Activated CD4-positive, alpha-beta T cell treated with anti-CD3 and anti-CD28 coated beads for 36 hours (primary cell): ENCODE measurements at regions of chr2 and their contacts with region 1.

Region 1: DNA sequence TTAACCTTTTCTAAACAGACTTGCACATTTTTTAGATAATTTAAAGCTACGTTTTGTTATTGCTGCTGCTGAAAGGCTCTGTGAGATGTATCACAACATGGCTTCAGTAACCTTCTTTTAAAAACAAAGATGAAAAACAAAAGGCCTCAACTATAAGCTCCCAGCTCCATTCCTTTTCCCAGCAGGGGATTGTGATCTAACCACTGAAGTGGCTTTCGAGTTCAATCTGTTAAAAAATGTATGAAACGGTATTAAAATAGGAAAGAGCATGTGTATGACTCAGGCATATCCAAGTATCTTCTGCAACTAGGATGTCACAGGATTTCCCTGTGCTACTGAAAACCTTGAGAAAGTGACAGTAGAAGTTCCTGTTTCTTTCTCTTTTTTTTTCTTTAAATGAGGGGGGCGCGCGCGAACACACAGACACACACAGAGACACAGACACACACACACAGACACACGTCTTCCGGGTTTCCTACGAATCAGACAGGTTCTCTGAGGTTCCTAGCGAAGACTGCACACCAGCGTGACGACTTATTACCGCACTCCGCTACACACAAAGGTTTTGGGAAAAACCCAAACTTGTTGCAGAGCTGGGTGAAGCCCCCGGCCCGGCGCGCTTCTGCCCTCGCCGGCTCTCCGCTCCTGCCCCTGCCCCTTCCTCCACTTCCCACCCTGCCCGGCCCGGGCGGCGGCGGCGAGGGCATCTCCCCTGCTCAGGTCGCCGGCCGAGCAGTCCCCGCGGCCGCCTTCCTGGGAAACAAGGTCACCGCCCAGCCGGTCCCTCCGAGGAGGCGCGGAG is 86.8 kb downstream of the RBMS1 start:
- DNase-seq: peak; percentile 82
- ATAC-seq: peak; percentile 75
- H3K4me3 Mint-ChIP-seq: peak overlapping the region; percentile 85
- H3K27ac Mint-ChIP-seq: peak overlapping the region; percentile 98
- H3K4me1 Mint-ChIP-seq: peaks cover 79% of the 10 kb centered on the region
- H3K27me3 Mint-ChIP-seq: no peaks in the 10 kb centered on the region

Region 2: GRCh38 chr2:159286709-159287441 is 1119.9 kb before region 1 on chr2:
- CTCF ChIA-PET with region 1: no interaction called
- POLR2A ChIA-PET with region 1: no interaction called
- intact Hi-C with region 1: loop called in 1 of 2 experiments (anchors 10 kb)
- DNase-seq: peak; percentile 99
- ATAC-seq: peak; percentile 99
- H3K4me3 Mint-ChIP-seq: peak overlapping the region; percentile 84
- H3K27ac Mint-ChIP-seq: peak overlapping the region; percentile 83
- H3K4me1 Mint-ChIP-seq: peaks cover 29% of the 10 kb centered on the region
- H3K27me3 Mint-ChIP-seq: no peaks in the 10 kb centered on the region

Region 3: DNA sequence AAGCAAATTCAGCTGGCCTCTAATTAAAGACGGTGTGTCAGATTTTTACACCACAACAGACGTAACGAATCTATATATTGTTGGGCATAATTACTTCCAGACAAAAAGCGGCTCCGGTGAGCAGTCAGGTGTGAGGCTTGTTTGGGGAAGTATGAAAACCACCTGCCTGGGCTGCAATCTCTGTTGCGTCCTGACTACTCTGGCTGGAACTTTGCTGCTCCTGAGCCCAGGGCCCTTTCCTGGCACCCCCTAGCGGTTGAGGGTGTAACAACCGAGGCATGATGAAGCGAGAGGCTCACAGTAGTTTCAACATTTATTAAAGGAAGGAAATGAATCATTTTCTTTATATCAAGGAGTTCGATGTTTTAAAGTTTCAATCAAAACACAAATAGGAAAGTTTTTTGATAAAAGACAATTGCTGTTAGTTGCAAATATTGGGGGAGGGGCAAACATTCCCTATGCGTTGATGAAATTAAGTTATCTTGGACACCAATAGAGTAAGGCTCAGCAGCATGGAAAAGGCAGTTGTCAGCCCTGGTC is 196.1 kb before region 1 on chr2:
- CTCF ChIA-PET with region 1: no interaction called
- POLR2A ChIA-PET with region 1: no interaction called
- intact Hi-C with region 1: no loop called
- DNase-seq: peak; percentile 88
- ATAC-seq: peak; percentile 90
- H3K4me3 Mint-ChIP-seq: no peak overlapping the region
- H3K27ac Mint-ChIP-seq: no peak overlapping the region
- H3K4me1 Mint-ChIP-seq: peaks cover 33% of the 10 kb centered on the region
- H3K27me3 Mint-ChIP-seq: peaks cover 6% of the 10 kb centered on the region

Region 4: GRCh38 chr2:160269803-160270570 is 136.8 kb before region 1 on chr2:
- CTCF ChIA-PET with region 1: interaction called, 3 read pairs
- POLR2A ChIA-PET with region 1: interaction called, 3 read pairs
- intact Hi-C with region 1: loop called in 1 of 2 experiments (anchors 2 kb)
- DNase-seq: peak; percentile 80
- ATAC-seq: peak; percentile 59
- H3K4me3 Mint-ChIP-seq: peak overlapping the region; percentile 57
- H3K27ac Mint-ChIP-seq: peak overlapping the region; percentile 52
- H3K4me1 Mint-ChIP-seq: peaks cover 46% of the 10 kb centered on the region
- H3K27me3 Mint-ChIP-seq: no peaks in the 10 kb centered on the region

Region 5: GRCh38 chr2:160394153-160394552 is 12.6 kb before region 1 on chr2:
- CTCF ChIA-PET with region 1: interaction called, 10 read pairs
- POLR2A ChIA-PET with region 1: no interaction called
- intact Hi-C with region 1: loop called (anchors 1 to 2 kb)
- DNase-seq: no peak
- ATAC-seq: peak; percentile 89
- H3K4me3 Mint-ChIP-seq: peak overlapping the region; percentile 44
- H3K27ac Mint-ChIP-seq: peak overlapping the region; percentile 76
- H3K4me1 Mint-ChIP-seq: peaks cover 52% of the 10 kb centered on the region
- H3K27me3 Mint-ChIP-seq: no peaks in the 10 kb centered on the region

Region 6: GRCh38 chr2:160493227-160494028 is 86.6 kb after region 1 on chr2 and contains the start of gene RBMS1:
- CTCF ChIA-PET with region 1: interaction called, 3 read pairs
- POLR2A ChIA-PET with region 1: interaction called, 3 read pairs
- intact Hi-C with region 1: loop called (anchors 2 kb)
- DNase-seq: peak; percentile 70
- ATAC-seq: peak; percentile 31
- H3K4me3 Mint-ChIP-seq: peak within 1 kb of the TSS; percentile 91
- H3K27ac Mint-ChIP-seq: peak within 1 kb of the TSS; percentile 65
- H3K4me1 Mint-ChIP-seq: peaks cover 48% of the 10 kb centered on the region
- H3K27me3 Mint-ChIP-seq: peaks cover 2% of the 10 kb centered on the region
- total RNA-seq, gene RBMS1: 39.3 to 47.7 TPM

Region 7: DNA sequence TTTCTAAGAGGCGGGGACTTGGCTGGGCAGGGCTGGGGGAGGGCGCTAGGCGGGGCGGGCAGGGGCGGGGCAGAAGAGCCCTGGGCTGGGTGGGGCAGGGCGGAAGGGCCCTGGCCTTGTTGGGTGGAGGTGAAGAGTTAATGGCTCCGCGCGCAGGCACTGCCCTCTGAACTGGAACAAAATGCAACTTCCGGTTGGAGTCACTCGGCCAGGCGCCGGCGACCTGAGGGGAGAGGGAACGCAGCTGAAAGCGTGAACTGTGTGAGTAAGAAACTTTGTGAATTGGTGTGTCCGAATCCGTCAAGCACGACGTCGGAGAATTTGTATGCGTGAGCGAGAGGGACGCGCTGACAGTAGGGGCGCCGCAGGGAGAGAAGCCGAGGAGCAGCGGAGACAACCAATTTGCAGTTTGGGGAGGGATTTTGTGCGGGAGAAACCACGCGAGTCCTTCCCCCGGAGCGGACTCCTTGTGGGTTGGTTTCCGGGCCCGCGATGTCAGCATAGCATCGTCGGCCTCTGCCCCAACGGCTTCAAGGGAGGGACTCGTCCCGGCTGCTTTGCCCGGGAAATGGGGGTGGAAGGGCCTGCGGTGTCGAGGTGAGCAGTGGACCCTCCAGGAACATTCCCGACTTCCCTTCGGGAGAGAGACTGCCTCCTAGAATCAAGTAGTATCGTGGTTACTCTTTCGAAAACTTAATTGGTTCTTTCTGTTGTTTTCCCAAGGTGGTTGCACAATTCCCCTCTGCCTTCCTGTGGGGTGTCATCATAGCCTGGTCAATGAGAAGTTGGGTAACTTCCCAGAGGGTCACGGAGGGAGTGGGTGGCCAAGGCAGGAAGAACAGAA is 753.7 kb after region 1 on chr2 and contains the start of gene TANK:
- CTCF ChIA-PET with region 1: no interaction called
- POLR2A ChIA-PET with region 1: no interaction called
- intact Hi-C with region 1: loop called (anchors 10 kb)
- DNase-seq: peak; percentile 95
- ATAC-seq: peak; percentile 95
- H3K4me3 Mint-ChIP-seq: peak within 1 kb of the TSS; percentile 91
- H3K27ac Mint-ChIP-seq: peak within 1 kb of the TSS; percentile 99
- H3K4me1 Mint-ChIP-seq: peaks cover 52% of the 10 kb centered on the region
- H3K27me3 Mint-ChIP-seq: no peaks in the 10 kb centered on the region
- total RNA-seq, gene TANK: 54.6 to 59.7 TPM